ENCODE measurements at regions of chr15 and their contacts with region 1.

Region 1: GRCh38 chr15:32659340-32660155 is 18.0 kb downstream of the SCG5 start:
- DNase-seq: no peak
- H3K4me3 ChIP-seq: no peak overlapping the region
- H3K27ac ChIP-seq: no peak overlapping the region
- H3K4me1 ChIP-seq: no peaks in the 10 kb centered on the region
- H3K27me3 ChIP-seq: no peaks in the 10 kb centered on the region
- CTCF ChIP-seq: no peak
- POLR2A ChIP-seq: no peak

Region 2: GRCh38 chr15:32688151-32688639 is 28.6 kb after region 1 on chr15:
- intact Hi-C with region 1: no loop called
- DNase-seq: no peak
- H3K4me3 ChIP-seq: no peak overlapping the region
- H3K27ac ChIP-seq: no peak overlapping the region
- H3K4me1 ChIP-seq: no peaks in the 10 kb centered on the region
- H3K27me3 ChIP-seq: no peaks in the 10 kb centered on the region
- CTCF ChIP-seq: no peak
- POLR2A ChIP-seq: no peak

Region 3: GRCh38 chr15:32936283-32936918 is 276.9 kb after region 1 on chr15:
- intact Hi-C with region 1: loop called in 1 of 2 experiments (anchors 5 kb)
- DNase-seq: no peak
- H3K4me3 ChIP-seq: no peak overlapping the region
- H3K27ac ChIP-seq: no peak overlapping the region
- H3K4me1 ChIP-seq: no peaks in the 10 kb centered on the region
- H3K27me3 ChIP-seq: no peaks in the 10 kb centered on the region
- CTCF ChIP-seq: peak; percentile 52 to 72 (median 69)
- POLR2A ChIP-seq: no peak

Region 4: GRCh38 chr15:32994810-32995424 is 335.4 kb after region 1 on chr15:
- intact Hi-C with region 1: loop called in 1 of 2 experiments (anchors 5 kb)
- DNase-seq: no peak
- H3K4me3 ChIP-seq: no peak overlapping the region
- H3K27ac ChIP-seq: no peak overlapping the region
- H3K4me1 ChIP-seq: no peaks in the 10 kb centered on the region
- H3K27me3 ChIP-seq: no peaks in the 10 kb centered on the region
- CTCF ChIP-seq: peak in 5 of 6 experiments; percentile 23 to 62 (median 28)
- POLR2A ChIP-seq: no peak

Measured in adrenal gland (tissue), 19 donors.